ENCODE measurements at regions of chr20 and their contacts with region 1.

Region 1: GRCh38 chr20:59455402-59456341 is 148.7 kb upstream of the PHACTR3 start:
- DNase-seq: peak; percentile 48
- H3K4me3 ChIP-seq: no peak overlapping the region
- H3K27ac ChIP-seq: no peak overlapping the region
- H3K4me1 ChIP-seq: no peaks in the 10 kb centered on the region
- H3K27me3 ChIP-seq: no peaks in the 10 kb centered on the region
- CTCF ChIP-seq: peak in 3 of 4 experiments; percentile 61 to 68 (median 68)
- POLR2A ChIP-seq: no peak

Region 2: DNA sequence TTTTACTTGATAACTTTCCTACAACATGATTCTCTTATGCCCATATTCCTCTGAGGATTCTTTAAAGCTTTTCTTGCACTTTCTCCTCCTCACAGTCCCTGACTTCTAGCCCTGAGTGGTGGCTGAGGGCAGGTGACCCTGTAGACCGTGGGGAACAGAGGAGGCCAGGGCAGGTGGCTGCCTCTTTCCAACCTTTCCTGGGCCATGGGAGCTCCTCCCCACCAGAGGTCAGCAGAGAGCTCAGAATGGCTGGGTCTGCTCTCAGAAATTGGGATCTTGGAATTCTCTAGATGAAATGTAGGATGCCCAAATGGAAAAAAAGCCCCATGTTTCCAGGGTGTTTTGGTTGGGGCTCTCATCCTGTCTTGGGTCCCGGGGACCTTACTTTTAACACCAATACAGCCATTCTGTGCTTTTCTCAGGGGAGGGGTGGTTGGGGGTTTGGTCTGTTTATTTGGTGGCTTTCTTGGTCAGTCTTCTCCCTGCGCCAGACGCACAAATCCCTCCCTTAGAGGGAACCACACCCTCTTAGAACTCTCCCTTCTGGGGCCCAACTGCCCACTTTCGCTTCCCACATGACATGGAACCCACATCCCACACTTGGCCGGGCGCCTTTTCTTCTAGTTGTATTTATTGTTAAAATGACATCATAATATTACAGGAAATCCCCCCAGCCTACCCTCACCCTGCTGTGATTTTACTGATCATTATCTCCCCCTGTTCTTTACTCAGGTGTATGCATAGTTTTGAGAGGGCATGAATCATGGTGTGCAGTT is 585.2 kb before region 1 on chr20:
- intact Hi-C with region 1: loop called (anchors 2 kb)
- DNase-seq: peak; percentile 63
- H3K4me3 ChIP-seq: no peak overlapping the region
- H3K27ac ChIP-seq: no peak overlapping the region
- H3K4me1 ChIP-seq: no peaks in the 10 kb centered on the region
- H3K27me3 ChIP-seq: no peaks in the 10 kb centered on the region
- CTCF ChIP-seq: peak; percentile 63 to 86 (median 83)
- POLR2A ChIP-seq: no peak

Region 3: GRCh38 chr20:59087829-59088433 is 367.7 kb before region 1 on chr20:
- intact Hi-C with region 1: loop called (anchors 2 kb)
- DNase-seq: peak; percentile 78
- H3K4me3 ChIP-seq: no peak overlapping the region
- H3K27ac ChIP-seq: no peak overlapping the region
- H3K4me1 ChIP-seq: peaks cover 8% of the 10 kb centered on the region
- H3K27me3 ChIP-seq: no peaks in the 10 kb centered on the region
- CTCF ChIP-seq: peak; percentile 84 to 92 (median 85)
- POLR2A ChIP-seq: no peak

Region 4: GRCh38 chr20:59547596-59547995 is 91.9 kb after region 1 on chr20:
- intact Hi-C with region 1: no loop called
- DNase-seq: no peak
- H3K4me3 ChIP-seq: no peak overlapping the region
- H3K27ac ChIP-seq: no peak overlapping the region
- H3K4me1 ChIP-seq: no peaks in the 10 kb centered on the region
- H3K27me3 ChIP-seq: no peaks in the 10 kb centered on the region
- CTCF ChIP-seq: no peak
- POLR2A ChIP-seq: no peak

Measured in prostate gland (tissue), 2 donors.